ENCODE measurements at regions of chr20 and their contacts with region 1.

Region 1: GRCh38 chr20:63183422-63184348 is 32.2 kb downstream of the YTHDF1 start:
- H3K4me3 ChIP-seq: no peak overlapping the region
- H3K27ac ChIP-seq: no peak overlapping the region
- H3K4me1 ChIP-seq: peaks cover 3% of the 10 kb centered on the region; the same call in 1 of the 2 replicates
- CTCF ChIP-seq: peak; percentile 83

Region 2: DNA sequence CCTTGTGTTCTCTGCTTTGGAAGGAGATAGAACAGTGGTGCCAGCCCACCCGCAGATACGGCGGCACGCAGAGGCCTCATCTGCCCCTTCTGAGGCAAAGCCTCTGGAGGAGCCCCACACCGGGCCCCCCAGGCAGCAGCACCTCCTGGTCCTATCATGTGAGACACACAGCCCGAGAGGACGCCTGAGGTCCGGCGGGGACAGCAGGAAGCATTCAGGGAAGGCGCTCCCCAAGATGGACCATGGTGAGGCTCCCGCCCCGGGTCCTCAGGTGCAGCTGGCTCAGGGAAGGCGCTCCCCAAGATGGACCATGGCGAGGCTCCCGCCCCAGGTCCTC is 15.5 kb before region 1 on chr20:
- CTCF ChIA-PET with region 1: interaction called, 10 read pairs
- POLR2A ChIA-PET with region 1: interaction called, 3 read pairs
- H3K4me3 ChIP-seq: no peak overlapping the region
- H3K27ac ChIP-seq: no peak overlapping the region
- H3K4me1 ChIP-seq: no peaks in the 10 kb centered on the region
- CTCF ChIP-seq: no peak

Region 3: DNA sequence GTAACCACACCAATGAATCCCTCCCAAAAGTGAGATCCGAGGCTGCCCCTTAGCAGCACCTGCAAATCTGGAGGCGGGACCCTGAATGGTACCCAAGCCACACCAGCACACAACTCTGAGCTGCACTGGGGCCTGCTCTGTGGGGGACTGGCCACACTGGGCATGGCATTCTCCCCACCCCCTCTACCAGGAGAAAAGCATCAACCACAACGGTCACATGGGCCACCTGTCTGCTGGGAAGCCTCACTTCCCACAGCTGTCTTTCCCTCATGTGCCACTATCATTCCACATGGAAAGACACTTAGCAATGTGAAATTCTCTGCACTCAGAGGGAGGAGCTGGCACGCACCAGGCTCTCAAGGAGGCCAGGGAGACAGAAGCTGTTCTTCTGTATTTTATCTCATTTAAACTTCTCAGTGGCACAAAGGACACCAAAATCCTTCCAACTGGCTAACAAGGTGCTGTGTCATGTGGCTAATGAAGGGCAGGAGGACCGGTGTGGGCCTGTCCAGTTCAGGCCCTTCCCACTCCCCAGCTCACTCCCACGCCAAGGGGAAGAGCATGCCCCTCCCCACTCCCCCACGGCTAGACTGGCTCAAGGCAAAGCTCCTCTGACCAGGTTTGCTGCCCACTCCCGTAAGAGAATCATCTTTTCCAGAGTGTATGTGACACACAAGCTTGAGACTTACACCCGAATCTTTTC is 13.2 kb after region 1 on chr20:
- CTCF ChIA-PET with region 1: interaction called, 25 read pairs
- POLR2A ChIA-PET with region 1: no interaction called
- H3K4me3 ChIP-seq: no peak overlapping the region
- H3K27ac ChIP-seq: no peak overlapping the region
- H3K4me1 ChIP-seq: no peaks in the 10 kb centered on the region; the same call in 1 of the 2 replicates
- CTCF ChIP-seq: no peak

Region 4: GRCh38 chr20:63216041-63216848 is 32.6 kb after region 1 on chr20 and contains the start of gene YTHDF1:
- CTCF ChIA-PET with region 1: interaction called, 13 read pairs
- POLR2A ChIA-PET with region 1: interaction called, 4 read pairs
- H3K4me3 ChIP-seq: peak within 1 kb of the TSS; percentile 73
- H3K27ac ChIP-seq: peak within 1 kb of the TSS; percentile 89
- H3K4me1 ChIP-seq: no peaks in the 10 kb centered on the region; the same call in 1 of the 2 replicates
- CTCF ChIP-seq: no peak

Region 5: DNA sequence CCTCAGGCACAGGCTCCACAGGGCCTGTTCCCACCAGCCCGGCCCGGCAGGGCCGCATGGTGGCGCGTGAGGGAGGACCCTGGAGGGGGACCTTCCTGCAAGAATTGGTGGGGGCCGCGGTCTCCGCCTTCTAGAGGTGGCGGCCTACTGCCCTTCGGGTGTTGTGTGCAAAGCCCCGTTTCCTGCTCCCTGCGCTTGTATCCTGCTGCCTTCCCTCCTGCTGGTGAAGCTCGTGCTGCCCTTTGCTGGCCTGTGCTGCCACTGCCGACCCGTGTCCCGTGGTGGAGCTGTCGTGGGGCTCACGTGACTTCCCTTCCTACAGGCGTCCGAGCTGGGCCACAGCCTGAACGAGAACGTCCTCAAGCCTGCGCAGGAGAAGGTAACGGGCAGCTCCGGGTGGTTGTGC is 100.9 kb after region 1 on chr20:
- CTCF ChIA-PET with region 1: no interaction called
- POLR2A ChIA-PET with region 1: no interaction called
- H3K4me3 ChIP-seq: no peak overlapping the region
- H3K27ac ChIP-seq: no peak overlapping the region
- H3K4me1 ChIP-seq: no peaks in the 10 kb centered on the region
- CTCF ChIP-seq: no peak

Measured in HEK293 (cell line).